ENCODE measurements at regions of chr2 and their contacts with region 1.

Region 1: GRCh38 chr2:28751252-28751955 is at the start of gene PPP1CB:
- DNase-seq: peak; percentile 93
- ATAC-seq: peak; percentile 89
- H3K4me3 Mint-ChIP-seq: peak within 1 kb of the TSS; percentile 94
- H3K27ac Mint-ChIP-seq: peak within 1 kb of the TSS; percentile 96
- H3K4me1 Mint-ChIP-seq: peaks cover 54% of the 10 kb centered on the region
- H3K27me3 Mint-ChIP-seq: no peaks in the 10 kb centered on the region
- CTCF ChIP-seq: no peak
- total RNA-seq, gene PPP1CB: 206 to 216 TPM

Region 2: DNA sequence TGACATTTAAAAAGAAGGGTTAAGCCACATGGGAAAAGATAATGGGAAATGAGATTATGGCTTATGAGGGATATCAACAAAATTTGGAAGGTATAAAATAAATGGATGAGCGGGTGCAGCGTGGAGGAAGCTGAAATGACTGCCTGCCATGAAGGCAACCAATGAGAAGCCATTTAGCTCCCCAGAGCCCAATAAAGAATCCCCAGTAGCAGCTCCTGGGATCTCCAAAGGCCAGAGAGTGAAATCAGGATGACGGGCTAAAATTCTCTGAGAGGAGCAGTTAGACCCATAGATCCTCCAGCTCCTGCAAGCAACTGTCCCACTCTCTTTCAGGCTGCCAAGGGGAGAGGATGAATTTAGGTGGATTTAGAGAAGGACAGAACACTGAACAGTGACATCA is 1793.9 kb before region 1 on chr2:
- CTCF ChIA-PET with region 1: no interaction called
- POLR2A ChIA-PET with region 1: no interaction called
- intact Hi-C with region 1: no loop called
- DNase-seq: no peak
- ATAC-seq: no peak
- H3K4me3 Mint-ChIP-seq: no peak overlapping the region
- H3K27ac Mint-ChIP-seq: no peak overlapping the region
- H3K4me1 Mint-ChIP-seq: no peaks in the 10 kb centered on the region
- H3K27me3 Mint-ChIP-seq: peaks cover 20% of the 10 kb centered on the region
- CTCF ChIP-seq: no peak

Region 3: GRCh38 chr2:28610583-28611201 is 140.7 kb before region 1 on chr2:
- CTCF ChIA-PET with region 1: interaction called, 3 read pairs
- POLR2A ChIA-PET with region 1: interaction called, 5 read pairs
- intact Hi-C with region 1: loop called (anchors 5 kb)
- DNase-seq: peak; percentile 77
- ATAC-seq: peak; percentile 62
- H3K4me3 Mint-ChIP-seq: no peak overlapping the region
- H3K27ac Mint-ChIP-seq: no peak overlapping the region
- H3K4me1 Mint-ChIP-seq: peaks cover 24% of the 10 kb centered on the region
- H3K27me3 Mint-ChIP-seq: no peaks in the 10 kb centered on the region
- CTCF ChIP-seq: no peak

Region 4: DNA sequence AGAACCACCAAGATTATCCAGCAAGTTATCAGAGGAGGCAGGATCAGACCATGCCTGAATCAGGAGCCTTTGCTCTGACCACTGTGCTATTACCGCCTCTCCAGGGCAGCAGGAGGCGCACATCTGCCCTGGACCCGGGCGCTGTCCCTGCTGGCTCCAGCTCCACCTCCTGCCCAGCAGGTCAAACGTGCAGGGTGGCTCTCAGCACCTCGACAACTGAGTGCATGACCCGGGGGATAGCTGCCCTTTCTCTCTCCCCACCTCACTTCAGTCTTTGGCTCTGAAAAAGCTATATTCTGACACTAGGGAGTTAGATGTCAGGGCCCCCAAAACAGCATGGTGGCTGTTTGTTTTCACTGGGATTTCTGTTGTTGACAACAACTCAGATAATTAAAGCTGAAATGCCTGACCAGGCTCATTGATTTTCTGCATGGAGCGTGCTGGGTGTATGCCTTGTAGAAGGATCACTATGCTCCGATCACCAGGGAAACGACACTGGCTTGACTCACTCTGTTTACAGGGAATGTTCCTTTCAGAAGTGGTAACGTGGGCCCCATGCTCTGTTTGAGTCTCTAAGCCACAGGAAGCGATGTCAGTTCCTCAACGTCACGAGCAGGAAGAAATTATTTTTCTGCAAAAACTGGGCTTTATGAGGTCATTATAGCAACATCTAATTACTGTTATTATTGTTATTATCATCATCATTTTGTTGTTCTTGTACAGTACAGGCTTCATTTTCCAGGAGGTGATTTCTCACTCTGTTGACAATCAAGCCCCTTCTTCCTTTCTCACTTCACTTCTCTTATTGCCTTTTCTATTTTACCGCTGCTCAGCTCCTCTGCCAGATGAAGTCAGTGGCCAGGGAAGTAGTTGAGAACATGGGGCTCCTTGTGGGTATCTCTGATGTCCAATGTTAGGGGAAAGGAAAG is 130.0 kb before region 1 on chr2:
- CTCF ChIA-PET with region 1: interaction called, 3 read pairs
- POLR2A ChIA-PET with region 1: interaction called, 14 read pairs
- intact Hi-C with region 1: no loop called
- DNase-seq: peak; percentile 79
- ATAC-seq: peak; percentile 43
- H3K4me3 Mint-ChIP-seq: peak overlapping the region; percentile 41
- H3K27ac Mint-ChIP-seq: peak overlapping the region; percentile 94
- H3K4me1 Mint-ChIP-seq: peaks cover 94% of the 10 kb centered on the region
- H3K27me3 Mint-ChIP-seq: no peaks in the 10 kb centered on the region
- CTCF ChIP-seq: no peak

Region 5: DNA sequence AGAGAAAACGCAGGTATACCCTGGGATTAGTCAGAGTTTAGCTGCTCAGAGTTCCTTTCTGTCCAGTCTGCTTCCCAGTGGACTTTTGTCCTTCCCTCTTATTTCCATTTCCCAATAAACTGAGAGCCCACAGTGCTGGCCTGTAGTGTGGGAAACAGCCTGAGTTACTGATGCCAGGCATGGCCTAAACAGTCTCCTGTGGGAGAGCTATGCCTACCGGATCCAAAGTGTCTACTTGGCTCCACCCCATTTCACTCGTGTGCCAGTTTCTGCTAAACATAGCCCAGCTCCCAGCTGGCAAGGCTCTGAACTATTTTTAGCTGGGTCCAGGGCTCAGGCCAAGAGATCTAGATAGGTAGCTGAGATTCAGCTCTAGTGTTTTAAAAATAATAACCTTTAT is 15.4 kb before region 1 on chr2:
- CTCF ChIA-PET with region 1: no interaction called
- POLR2A ChIA-PET with region 1: interaction called, 11 read pairs
- intact Hi-C with region 1: no loop called
- DNase-seq: no peak
- ATAC-seq: no peak
- H3K4me3 Mint-ChIP-seq: no peak overlapping the region
- H3K27ac Mint-ChIP-seq: no peak overlapping the region
- H3K4me1 Mint-ChIP-seq: no peaks in the 10 kb centered on the region
- H3K27me3 Mint-ChIP-seq: no peaks in the 10 kb centered on the region
- CTCF ChIP-seq: no peak